ENCODE measurements at regions of chr1 and their contacts with region 1.

Region 1: GRCh38 chr1:27044613-27045151 is 32.0 kb upstream of the TENT5B start:
- DNase-seq: peak; percentile 72 to 88 (median 84)
- H3K4me3 ChIP-seq: peak overlapping the region; percentile 41
- H3K4me3 Mint-ChIP-seq: peak overlapping the region in 6 of 7 donors; percentile 23 to 75 (median 60)
- H3K27ac ChIP-seq: no peak overlapping the region
- H3K27ac Mint-ChIP-seq: peak overlapping the region in 3 of 8 donors; percentile 5 to 60 (median 13)
- H3K4me1 ChIP-seq: peaks cover 13% of the 10 kb centered on the region
- H3K4me1 Mint-ChIP-seq: peaks cover 17 to 20% (median 19%) of the 10 kb centered on the region in 3 donors
- H3K27me3 ChIP-seq: no peaks in the 10 kb centered on the region
- H3K27me3 Mint-ChIP-seq: peaks cover 2 to 4% of the 10 kb centered on the region in 2 donors

Region 2: DNA sequence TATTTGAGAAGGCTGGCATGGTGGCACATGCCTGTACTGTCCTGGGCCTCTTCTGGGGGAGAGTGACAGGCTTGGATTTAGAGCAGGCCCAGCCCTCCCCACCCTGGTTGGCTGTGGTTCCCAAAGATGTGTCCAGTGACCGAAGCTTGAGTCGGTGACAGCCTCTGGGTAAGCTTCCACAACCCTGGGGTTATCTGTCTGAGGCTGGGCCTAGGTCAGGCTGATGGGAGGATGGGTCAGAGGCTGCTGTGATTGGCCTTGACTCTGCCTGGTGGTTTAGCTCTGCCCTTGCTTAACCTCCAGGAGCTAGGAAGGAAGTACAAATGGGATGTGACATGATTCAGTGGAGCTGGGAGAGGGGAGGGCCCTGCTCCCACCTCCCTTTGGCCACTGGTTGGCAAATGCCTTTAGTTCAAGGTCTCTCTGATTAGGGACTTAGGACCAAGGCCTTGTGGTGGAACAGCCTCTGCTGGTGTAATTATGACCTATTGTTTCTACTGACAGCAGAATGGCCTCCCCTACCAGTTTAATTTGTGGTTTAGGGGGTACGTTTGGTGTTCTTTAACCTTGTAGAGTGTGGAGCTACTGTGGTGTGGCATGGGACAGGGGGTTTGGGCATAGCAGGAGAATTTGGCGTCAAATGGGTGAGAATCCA is 106.6 kb before region 1 on chr1:
- CTCF ChIA-PET with region 1: no interaction called
- POLR2A ChIA-PET with region 1: no interaction called
- DNase-seq: no peak
- H3K4me3 ChIP-seq: no peak overlapping the region
- H3K4me3 Mint-ChIP-seq: no peak overlapping the region
- H3K27ac ChIP-seq: no peak overlapping the region
- H3K27ac Mint-ChIP-seq: peak overlapping the region in 2 of 8 donors; percentile 65 to 67
- H3K4me1 ChIP-seq: no peaks in the 10 kb centered on the region
- H3K4me1 Mint-ChIP-seq: peaks cover 0 to 4% (median under 1%) of the 10 kb centered on the region in 3 donors
- H3K27me3 ChIP-seq: no peaks in the 10 kb centered on the region
- H3K27me3 Mint-ChIP-seq: no peaks in the 10 kb centered on the region

Region 3: GRCh38 chr1:27057801-27058625 is 13.3 kb after region 1 on chr1:
- CTCF ChIA-PET with region 1: interaction called, 66 read pairs
- POLR2A ChIA-PET with region 1: interaction called, 3 read pairs
- DNase-seq: no peak
- H3K4me3 ChIP-seq: no peak overlapping the region
- H3K4me3 Mint-ChIP-seq: no peak overlapping the region
- H3K27ac ChIP-seq: no peak overlapping the region
- H3K27ac Mint-ChIP-seq: peak overlapping the region in 1 of 8 donors; percentile 57
- H3K4me1 ChIP-seq: no peaks in the 10 kb centered on the region
- H3K4me1 Mint-ChIP-seq: no peaks in the 10 kb centered on the region
- H3K27me3 ChIP-seq: no peaks in the 10 kb centered on the region
- H3K27me3 Mint-ChIP-seq: peaks cover 0 to 6% of the 10 kb centered on the region in 2 donors

Region 4: GRCh38 chr1:27077968-27078367 is 33.3 kb after region 1 on chr1:
- CTCF ChIA-PET with region 1: interaction called, 15 read pairs
- POLR2A ChIA-PET with region 1: no interaction called
- DNase-seq: no peak
- H3K4me3 ChIP-seq: no peak overlapping the region
- H3K4me3 Mint-ChIP-seq: no peak overlapping the region
- H3K27ac ChIP-seq: no peak overlapping the region
- H3K27ac Mint-ChIP-seq: no peak overlapping the region
- H3K4me1 ChIP-seq: no peaks in the 10 kb centered on the region
- H3K4me1 Mint-ChIP-seq: no peaks in the 10 kb centered on the region
- H3K27me3 ChIP-seq: no peaks in the 10 kb centered on the region
- H3K27me3 Mint-ChIP-seq: peaks cover 1 to 3% of the 10 kb centered on the region in 2 donors

Region 5: GRCh38 chr1:27090911-27091310 is 46.2 kb after region 1 on chr1:
- CTCF ChIA-PET with region 1: interaction called, 134 read pairs
- POLR2A ChIA-PET with region 1: no interaction called
- DNase-seq: no peak
- H3K4me3 ChIP-seq: no peak overlapping the region
- H3K4me3 Mint-ChIP-seq: no peak overlapping the region
- H3K27ac ChIP-seq: no peak overlapping the region
- H3K27ac Mint-ChIP-seq: no peak overlapping the region
- H3K4me1 ChIP-seq: no peaks in the 10 kb centered on the region
- H3K4me1 Mint-ChIP-seq: no peaks in the 10 kb centered on the region
- H3K27me3 ChIP-seq: no peaks in the 10 kb centered on the region
- H3K27me3 Mint-ChIP-seq: no peaks in the 10 kb centered on the region

Region 6: DNA sequence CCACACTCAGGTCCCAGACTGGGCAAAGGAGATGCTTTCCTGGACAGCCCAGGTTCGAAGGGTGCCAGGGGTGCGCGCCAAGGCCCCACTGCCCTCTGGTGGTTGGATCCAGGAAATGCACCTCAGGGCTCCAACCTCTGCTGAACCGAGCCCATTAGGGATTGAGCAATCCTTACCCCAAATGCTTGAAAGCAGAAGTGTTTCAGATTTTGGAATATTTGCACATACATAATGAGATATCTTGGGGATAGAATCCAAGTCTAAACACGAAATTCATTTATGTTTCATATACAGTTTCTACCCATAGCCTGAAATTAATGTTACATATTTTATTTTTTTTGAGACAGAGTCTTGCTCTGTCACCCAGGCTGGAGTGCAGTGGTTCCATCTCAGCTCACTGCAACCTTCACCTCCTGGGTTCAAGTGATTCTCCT is 52.8 kb after region 1 on chr1:
- CTCF ChIA-PET with region 1: interaction called, 134 read pairs
- POLR2A ChIA-PET with region 1: interaction called, 3 read pairs
- DNase-seq: peak; percentile 57 to 78 (median 64)
- H3K4me3 ChIP-seq: no peak overlapping the region
- H3K4me3 Mint-ChIP-seq: no peak overlapping the region
- H3K27ac ChIP-seq: no peak overlapping the region
- H3K27ac Mint-ChIP-seq: peak overlapping the region in 1 of 8 donors; percentile 19
- H3K4me1 ChIP-seq: peaks cover under 1% of the 10 kb centered on the region
- H3K4me1 Mint-ChIP-seq: peaks cover 0 to under 1% (median 0%) of the 10 kb centered on the region in 3 donors
- H3K27me3 ChIP-seq: no peaks in the 10 kb centered on the region
- H3K27me3 Mint-ChIP-seq: no peaks in the 10 kb centered on the region